ENCODE measurements at regions of chr12 and their contacts with region 1.

Region 1: DNA sequence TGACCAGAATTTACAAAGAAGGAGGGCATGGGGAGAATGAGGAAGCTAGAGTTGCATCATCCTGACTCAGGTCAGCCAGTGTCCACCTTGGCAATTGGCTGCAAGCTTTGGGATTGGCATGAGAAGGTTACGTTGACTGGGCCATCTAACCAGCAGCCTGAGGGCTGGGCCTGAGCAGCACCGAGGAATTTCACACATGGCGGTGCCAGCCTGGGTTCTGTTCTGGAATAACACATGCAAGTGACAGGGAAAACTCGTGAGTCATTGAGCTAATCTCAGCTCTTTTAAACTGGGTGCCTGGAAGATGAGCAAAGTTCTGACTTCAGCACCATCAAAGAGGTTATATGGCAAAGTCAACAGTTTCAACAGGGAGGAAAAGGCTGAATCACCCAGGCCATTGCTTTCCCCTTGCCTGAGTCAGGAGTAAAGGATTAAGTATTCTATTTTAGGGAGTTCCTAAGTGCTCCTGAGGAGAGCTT is 543.2 kb upstream of the TBX3 start:
- DNase-seq: peak; percentile 87 to 97
- ATAC-seq: peak; percentile 94 to 96
- H3K4me3 ChIP-seq: no peak overlapping the region
- H3K27ac ChIP-seq: peak overlapping the region; percentile 83 to 92 (median 84)
- H3K4me1 ChIP-seq: peaks cover 14 to 36% of the 10 kb centered on the region in 2 donors
- H3K27me3 ChIP-seq: no peaks in the 10 kb centered on the region
- CTCF ChIP-seq: no peak
- POLR2A ChIP-seq: no peak

Region 2: DNA sequence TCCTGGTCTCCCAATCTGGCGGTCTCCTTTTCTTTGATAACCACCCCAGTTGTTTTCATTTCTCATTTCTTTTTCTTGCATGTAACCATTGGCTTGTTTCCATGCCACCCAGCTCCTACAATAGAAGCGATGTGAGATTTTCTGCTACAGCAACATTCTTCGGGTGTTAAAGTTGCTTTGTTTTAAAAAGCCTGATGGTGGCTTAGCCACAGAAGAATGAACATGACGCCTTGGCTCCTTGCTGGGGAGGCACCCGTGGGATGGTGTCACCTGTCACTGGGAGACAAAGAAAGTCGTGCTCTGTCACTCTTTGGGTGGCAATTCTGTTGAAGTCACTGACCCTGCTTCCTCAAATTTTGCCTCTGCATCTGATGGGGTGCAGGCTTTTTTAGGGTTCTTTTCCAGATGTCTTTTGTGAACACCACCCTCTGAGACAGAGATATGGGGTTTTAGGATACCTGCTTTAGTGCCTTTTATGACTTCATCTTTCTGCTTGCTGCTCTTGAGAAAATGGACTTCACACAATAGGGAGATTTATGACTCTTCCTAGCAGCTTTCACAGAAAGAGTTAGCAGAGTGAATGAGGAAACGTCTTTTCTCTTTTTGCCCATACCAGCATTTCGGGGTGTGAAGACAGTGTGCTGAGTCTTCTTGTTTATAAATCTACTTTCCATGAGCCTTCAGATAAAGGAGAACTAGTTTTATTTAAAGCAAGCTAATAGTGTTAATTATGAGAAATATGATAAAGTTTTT is 277.9 kb before region 1 on chr12:
- in situ Hi-C with region 1: no loop called
- intact Hi-C with region 1: no loop called
- DNase-seq: no peak
- ATAC-seq: no peak
- H3K4me3 ChIP-seq: no peak overlapping the region
- H3K27ac ChIP-seq: no peak overlapping the region
- H3K4me1 ChIP-seq: no peaks in the 10 kb centered on the region
- H3K27me3 ChIP-seq: no peaks in the 10 kb centered on the region
- CTCF ChIP-seq: no peak
- POLR2A ChIP-seq: no peak

Region 3: DNA sequence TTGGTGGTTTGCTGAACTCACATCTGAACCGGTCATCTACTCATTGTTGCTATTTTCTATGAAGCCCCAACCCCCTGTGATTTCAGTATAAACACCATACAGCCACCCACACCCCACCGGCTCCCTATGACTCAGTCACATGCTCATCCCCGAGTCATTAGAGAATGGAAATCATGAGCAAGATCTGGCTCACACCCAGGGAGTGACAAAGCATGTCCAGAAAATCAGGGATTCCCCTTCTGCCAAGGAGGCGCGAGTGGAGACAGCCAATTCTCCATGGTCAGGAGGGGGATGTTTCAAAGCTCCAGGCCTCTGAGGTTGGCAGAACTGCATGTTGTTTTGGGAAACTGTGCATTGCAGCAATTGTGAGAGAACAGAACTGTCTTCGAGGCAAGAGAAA is 114.3 kb after region 1 on chr12:
- in situ Hi-C with region 1: no loop called
- intact Hi-C with region 1: loop called (anchors 1 kb)
- DNase-seq: peak; percentile 56 to 82
- ATAC-seq: peak; percentile 65 to 68
- H3K4me3 ChIP-seq: no peak overlapping the region
- H3K27ac ChIP-seq: peak overlapping the region; percentile 54 to 74 (median 64)
- H3K4me1 ChIP-seq: peaks cover 4 to 14% of the 10 kb centered on the region in 2 donors
- H3K27me3 ChIP-seq: no peaks in the 10 kb centered on the region
- CTCF ChIP-seq: no peak
- POLR2A ChIP-seq: no peak

Measured in gastrocnemius medialis (tissue), 4 donors.